Dendritic cell treated with granulocyte-macrophage colony-stimulating factor and Interleukin-4, amounts not matched to agents 40 ng/mL and 50 ng/mL, for 4 days (primary cell): ENCODE measurements at regions of chr19 and their contacts with region 1.

Region 1: GRCh38 chr19:8017808-8018207 is 12.4 kb upstream of the ELAVL1 start:
- H3K4me3 Mint-ChIP-seq: no peak overlapping the region
- H3K27ac Mint-ChIP-seq: peak overlapping the region; percentile 51
- H3K4me1 Mint-ChIP-seq: peaks cover 10% of the 10 kb centered on the region
- H3K27me3 Mint-ChIP-seq: no peaks in the 10 kb centered on the region

Region 2: DNA sequence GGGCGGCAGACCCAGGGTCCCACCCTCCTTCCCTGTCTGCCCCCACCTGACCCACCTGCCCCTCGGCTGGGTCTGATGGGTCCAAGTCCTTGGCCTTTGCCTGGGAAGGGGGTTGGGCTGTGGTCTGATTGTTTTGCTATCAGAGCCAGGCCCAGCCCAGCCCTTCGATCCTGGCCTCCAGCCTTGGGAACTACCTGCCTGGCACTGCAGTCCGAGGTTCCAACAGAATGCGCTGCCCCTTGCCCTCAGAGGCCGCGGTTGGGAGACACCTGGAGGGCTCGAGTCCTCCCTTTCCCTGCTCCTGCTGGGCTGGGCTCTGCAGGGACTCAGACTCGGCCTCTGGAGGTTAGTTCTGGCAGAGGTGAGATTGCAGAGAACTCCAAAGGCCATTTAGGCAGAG is 36.4 kb after region 1 on chr19:
- intact Hi-C with region 1: no loop called
- H3K4me3 Mint-ChIP-seq: no peak overlapping the region
- H3K27ac Mint-ChIP-seq: no peak overlapping the region
- H3K4me1 Mint-ChIP-seq: peaks cover 26% of the 10 kb centered on the region
- H3K27me3 Mint-ChIP-seq: peaks cover 14% of the 10 kb centered on the region

Region 3: DNA sequence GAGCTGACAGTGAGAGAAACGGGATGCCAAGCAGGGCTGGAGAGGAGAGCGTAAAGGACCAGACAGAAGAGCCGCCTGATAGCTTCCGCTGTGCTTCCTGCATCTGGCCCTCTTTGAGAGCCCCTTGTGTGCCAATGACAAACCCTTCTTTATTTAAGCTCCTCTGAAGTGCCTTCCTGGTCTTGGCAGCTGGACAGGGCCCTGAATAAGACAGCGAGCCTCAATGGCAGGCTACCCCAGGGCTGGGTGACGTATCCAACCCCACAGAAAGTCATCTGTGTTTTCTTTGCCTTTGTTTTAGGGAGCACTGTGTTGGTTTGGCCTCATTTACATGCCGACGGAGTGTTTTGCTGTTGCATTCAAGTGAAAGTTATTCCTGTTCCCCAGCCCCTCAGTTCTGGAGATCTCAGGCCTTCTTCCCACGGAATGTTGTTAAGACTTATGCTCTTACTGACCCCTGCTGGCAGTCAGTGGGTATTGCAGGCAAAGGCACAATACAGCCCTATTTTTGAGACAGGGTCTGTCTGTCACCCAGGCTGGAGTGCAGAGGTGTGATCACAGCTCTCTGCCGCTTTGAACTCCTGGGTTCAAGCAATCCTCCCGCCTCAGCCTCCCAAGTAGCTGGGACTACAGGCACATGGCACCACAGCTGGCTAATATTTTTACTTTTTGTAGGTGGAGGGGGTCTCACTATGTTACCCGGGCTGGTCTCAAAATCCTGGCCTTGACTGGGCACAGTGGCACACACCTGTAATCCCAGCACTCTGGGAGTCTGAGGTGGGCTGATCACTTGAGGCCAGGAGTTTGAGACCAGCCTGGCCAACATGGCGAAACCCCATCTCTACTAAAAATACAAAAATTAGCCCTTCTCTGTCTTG is 51.5 kb after region 1 on chr19:
- intact Hi-C with region 1: loop called (anchors 10 kb)
- H3K4me3 Mint-ChIP-seq: no peak overlapping the region
- H3K27ac Mint-ChIP-seq: no peak overlapping the region
- H3K4me1 Mint-ChIP-seq: peaks cover 15% of the 10 kb centered on the region
- H3K27me3 Mint-ChIP-seq: peaks cover 4% of the 10 kb centered on the region

Region 4: GRCh38 chr19:8113016-8113416 is 95.2 kb after region 1 on chr19:
- intact Hi-C with region 1: no loop called
- H3K4me3 Mint-ChIP-seq: no peak overlapping the region
- H3K27ac Mint-ChIP-seq: no peak overlapping the region
- H3K4me1 Mint-ChIP-seq: no peaks in the 10 kb centered on the region
- H3K27me3 Mint-ChIP-seq: peaks cover 8% of the 10 kb centered on the region

Region 5: DNA sequence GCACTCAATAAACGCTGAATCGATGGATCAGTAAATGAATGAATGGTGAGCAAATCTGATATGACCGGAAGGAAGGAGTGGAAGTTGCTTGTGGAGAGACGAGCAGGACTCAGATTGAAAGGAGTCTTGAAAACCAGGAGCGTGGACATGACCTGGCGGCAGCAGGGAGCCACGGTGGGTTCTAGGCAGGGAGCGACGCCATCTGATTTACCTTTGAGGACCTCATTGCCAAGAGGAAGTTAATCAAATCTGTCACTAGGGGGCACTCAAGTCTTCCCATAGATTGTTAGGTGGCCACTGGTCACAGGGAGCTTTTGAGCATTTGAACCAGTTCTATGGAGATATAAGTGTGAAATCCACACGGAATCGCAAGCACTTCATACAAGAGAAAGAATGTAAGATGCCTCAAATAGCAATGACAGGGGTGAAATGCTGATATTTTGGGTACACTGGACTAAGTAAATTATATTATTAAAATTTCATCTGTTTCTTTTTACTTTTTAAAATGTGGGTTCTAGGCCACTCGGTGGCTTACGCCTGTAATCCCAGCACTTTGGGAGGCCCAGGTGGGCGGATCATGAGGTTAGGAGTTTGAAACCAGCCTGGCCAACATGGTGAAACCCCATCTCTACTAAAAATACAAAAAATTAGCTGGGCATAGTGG is 140.7 kb after region 1 on chr19:
- intact Hi-C with region 1: loop called (anchors 10 kb)
- H3K4me3 Mint-ChIP-seq: no peak overlapping the region
- H3K27ac Mint-ChIP-seq: no peak overlapping the region
- H3K4me1 Mint-ChIP-seq: peaks cover 12% of the 10 kb centered on the region
- H3K27me3 Mint-ChIP-seq: peaks cover 42% of the 10 kb centered on the region

Region 6: DNA sequence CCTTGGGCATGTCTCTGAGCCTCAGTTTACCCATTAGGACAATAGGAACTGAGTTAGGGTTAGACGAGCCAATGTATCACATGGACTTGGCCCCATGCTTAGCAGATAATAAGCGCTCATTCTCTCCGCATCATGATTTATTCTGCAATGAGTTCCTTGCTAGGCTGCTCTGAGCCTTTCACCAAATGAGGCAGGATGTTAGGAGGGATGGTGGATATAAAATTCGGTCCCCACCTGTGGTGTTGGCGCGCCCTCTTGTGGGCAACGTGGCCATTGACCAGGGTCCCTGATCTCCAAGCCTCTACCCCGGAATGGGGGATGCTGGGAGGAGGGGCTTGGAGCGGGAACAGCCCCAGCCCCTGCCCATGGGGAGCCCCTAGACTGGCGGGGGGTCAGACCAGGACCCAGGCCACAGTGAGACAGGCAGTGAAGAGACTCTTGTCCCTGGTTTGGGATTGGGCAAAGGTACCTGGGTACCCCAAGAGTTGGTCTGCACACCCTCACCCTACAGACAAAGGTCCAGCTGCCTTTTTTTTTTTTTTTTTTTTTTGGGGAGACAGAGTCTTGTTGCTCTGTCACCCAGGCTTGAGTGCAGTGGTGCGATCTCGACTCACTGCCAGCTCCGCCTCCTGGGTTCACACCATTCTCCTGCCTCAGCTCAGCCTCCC is 235.2 kb after region 1 on chr19:
- intact Hi-C with region 1: loop called (anchors 5 kb)
- H3K4me3 Mint-ChIP-seq: no peak overlapping the region
- H3K27ac Mint-ChIP-seq: no peak overlapping the region
- H3K4me1 Mint-ChIP-seq: no peaks in the 10 kb centered on the region
- H3K27me3 Mint-ChIP-seq: peaks cover 26% of the 10 kb centered on the region